Left cardiac atrium (tissue), 4 donors: ENCODE measurements at regions of chr5 and their contacts with region 1.

Region 1: GRCh38 chr5:96978812-96979449 is 43.1 kb downstream of the LNPEP start:
- DNase-seq: no peak
- ATAC-seq: no peak

Region 2: DNA sequence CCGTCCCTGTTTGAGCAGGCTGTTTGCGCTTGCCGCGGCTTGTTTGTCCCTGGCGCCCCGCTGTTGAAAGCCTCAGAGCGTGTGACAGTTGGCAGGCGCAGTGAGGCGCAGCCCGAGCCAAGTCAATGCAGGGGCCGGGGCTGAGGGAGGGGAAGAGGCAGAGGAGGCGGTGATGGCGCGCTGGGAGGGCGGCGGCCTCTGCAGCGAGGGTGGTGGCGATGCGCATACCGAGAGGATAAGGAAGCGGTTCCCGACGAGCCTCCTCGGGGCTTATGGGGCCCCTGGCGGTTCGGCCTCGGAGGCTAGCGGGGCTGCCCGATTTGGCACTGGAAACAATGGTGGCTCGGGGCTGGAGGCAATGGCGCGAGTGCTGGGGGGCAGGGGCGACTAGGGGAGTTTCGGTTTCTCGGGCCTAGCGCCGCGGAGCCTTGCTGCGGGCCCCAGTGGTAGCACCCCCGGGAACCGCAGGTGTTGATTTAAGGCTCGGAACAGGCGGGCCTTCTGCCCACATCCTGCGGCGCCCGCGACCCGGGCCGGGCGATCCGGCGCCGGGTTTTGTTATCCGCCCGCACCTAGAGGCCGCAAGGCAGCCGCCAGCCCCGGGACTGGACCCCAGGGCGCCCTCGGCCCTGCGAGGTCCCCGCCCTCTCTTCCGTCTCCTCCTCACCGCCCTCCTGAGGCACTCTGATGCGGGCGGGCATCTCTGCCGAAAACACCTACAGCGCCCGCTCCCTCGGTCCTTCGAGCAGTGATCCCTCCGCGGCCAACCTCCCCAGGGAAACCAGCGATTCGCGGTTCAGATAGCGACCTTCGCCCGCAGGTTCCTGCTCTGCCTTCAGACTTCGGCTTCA is 44.0 kb before region 1 on chr5:
- intact Hi-C with region 1: loop called in 1 of 2 experiments (anchors 5 kb)
- DNase-seq: peak; percentile 92
- ATAC-seq: peak; percentile 85 to 94